Upper lobe of right lung (tissue), 1 donor: ENCODE measurements at regions of chr6 and their contacts with region 1.

Region 1: GRCh38 chr6:167904791-167905190 is 78.1 kb downstream of the AFDN start:
- DNase-seq: no peak
- ATAC-seq: no peak
- H3K4me3 ChIP-seq: no peak overlapping the region
- H3K27ac ChIP-seq: no peak overlapping the region
- H3K4me1 ChIP-seq: no peaks in the 10 kb centered on the region
- H3K27me3 ChIP-seq: no peaks in the 10 kb centered on the region
- CTCF ChIP-seq: no peak

Region 2: DNA sequence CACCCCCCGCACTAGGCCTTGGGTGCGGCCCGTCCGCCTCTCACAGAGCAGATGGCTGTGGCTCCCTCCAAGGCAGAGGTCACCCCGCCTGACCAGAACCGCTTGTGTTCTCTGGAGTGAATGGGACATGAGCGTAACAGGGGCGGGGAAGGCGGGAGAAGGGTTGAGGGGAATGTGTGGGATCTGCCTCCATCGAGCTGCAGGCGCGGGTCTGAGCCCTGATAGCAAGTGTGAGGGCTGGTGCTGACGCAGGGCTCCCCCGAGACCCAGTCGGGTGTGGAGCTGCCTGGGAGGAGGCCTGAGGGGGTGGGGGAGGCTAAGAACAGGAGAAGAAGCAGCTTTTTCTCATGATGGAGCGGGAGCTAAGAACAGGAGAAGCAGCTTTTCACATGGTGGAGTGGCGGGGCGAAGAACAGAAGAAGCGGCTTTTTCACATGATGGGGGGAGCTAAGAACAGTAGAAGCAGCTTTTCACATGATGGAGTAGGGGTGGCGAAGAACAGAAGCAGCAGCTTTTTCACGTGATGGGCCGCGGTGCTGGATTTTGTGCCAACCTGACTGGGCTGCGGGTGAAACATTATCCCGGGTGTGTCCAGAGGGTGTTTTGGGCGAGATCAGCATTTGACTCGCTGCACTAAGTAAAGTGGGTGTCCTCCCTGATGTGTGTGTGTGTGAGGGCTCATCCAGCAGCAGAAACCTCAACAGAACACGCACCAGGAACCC is 410.7 kb before region 1 on chr6:
- intact Hi-C with region 1: loop called (anchors 5 kb)
- DNase-seq: peak; percentile 44
- ATAC-seq: no peak
- H3K4me3 ChIP-seq: no peak overlapping the region
- H3K27ac ChIP-seq: no peak overlapping the region
- H3K4me1 ChIP-seq: peaks cover 5% of the 10 kb centered on the region
- H3K27me3 ChIP-seq: no peaks in the 10 kb centered on the region
- CTCF ChIP-seq: no peak